ENCODE measurements at regions of chr9 and their contacts with region 1.

Region 1: GRCh38 chr9:132768932-132769905 is 99.0 kb downstream of the GTF3C4 start:
- DNase-seq: peak; percentile 50
- ATAC-seq: peak; percentile 76
- H3K4me3 Mint-ChIP-seq: peak overlapping the region; percentile 100
- H3K27ac Mint-ChIP-seq: peak overlapping the region; percentile 98
- H3K4me1 Mint-ChIP-seq: peaks cover 22% of the 10 kb centered on the region
- H3K27me3 Mint-ChIP-seq: no peaks in the 10 kb centered on the region
- CTCF ChIP-seq: no peak

Region 2: GRCh38 chr9:131567910-131568309 is 1201.3 kb before region 1 on chr9:
- CTCF ChIA-PET with region 1: no interaction called
- POLR2A ChIA-PET with region 1: no interaction called
- intact Hi-C with region 1: loop called (anchors 5 kb)
- DNase-seq: no peak
- ATAC-seq: no peak
- H3K4me3 Mint-ChIP-seq: no peak overlapping the region
- H3K27ac Mint-ChIP-seq: peak overlapping the region; percentile 33
- H3K4me1 Mint-ChIP-seq: no peaks in the 10 kb centered on the region
- H3K27me3 Mint-ChIP-seq: no peaks in the 10 kb centered on the region
- CTCF ChIP-seq: no peak

Region 3: DNA sequence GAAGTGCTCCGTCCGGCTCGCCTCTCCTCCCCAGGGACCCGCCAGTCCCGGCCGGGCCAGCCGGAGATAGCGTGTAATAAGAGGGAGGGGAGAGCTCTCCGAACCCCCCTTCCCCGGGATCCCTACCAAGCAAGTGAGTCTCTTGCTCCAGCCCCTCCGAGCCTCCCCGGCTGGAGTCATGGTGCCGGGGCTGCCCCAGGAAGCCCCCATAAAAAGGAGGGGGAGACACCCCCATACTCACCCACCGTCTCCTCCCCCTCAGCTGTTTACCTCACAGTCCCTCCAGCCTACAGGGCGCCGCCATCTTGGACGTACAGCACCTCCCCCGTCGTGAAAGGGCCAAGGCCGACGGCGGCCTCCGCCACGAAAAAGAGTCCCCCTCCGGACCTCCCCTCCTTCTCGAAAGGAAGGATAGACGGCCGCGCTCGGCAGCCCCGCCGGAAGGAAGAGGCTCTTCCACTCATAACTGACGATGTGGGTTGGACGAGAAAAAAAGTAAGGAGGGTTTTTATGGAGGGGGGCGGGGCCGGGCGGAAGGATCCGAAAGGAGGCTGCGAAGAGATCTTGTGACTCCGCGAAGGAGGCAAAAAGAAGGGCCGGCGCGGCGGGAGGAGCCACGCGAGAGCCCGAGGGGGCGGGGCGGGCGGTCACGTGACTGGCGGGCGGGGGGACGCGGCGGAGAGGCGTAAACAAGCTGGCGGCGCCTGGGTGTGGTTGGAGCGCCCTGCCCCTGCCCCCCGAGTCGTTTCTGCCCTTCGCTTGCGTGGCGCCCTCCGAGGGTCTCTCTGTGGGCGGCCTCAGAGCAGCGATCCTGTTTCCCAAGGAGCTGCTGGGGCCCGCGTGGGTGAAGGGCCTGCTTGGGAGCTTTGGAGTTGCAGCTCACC is 175.3 kb after region 1 on chr9 and contains the start of gene TSC1:
- CTCF ChIA-PET with region 1: no interaction called
- POLR2A ChIA-PET with region 1: interaction called, 12 read pairs
- intact Hi-C with region 1: loop called (anchors 1 kb)
- DNase-seq: peak; percentile 96
- ATAC-seq: peak; percentile 90
- H3K4me3 Mint-ChIP-seq: peak within 1 kb of the TSS; percentile 98
- H3K27ac Mint-ChIP-seq: peak within 1 kb of the TSS; percentile 100
- H3K4me1 Mint-ChIP-seq: peaks cover 29% of the 10 kb centered on the region
- H3K27me3 Mint-ChIP-seq: no peaks in the 10 kb centered on the region
- CTCF ChIP-seq: no peak
- total RNA-seq, gene TSC1: 51.7 and 61.4 TPM in 2 replicates

Measured in activated B cell treated with CpG ODN at 0.5 μM for 24 hours (primary cell).